CD8-positive, alpha-beta T cell (primary cell): ENCODE measurements at regions of chr18 and their contacts with region 1.

Region 1: DNA sequence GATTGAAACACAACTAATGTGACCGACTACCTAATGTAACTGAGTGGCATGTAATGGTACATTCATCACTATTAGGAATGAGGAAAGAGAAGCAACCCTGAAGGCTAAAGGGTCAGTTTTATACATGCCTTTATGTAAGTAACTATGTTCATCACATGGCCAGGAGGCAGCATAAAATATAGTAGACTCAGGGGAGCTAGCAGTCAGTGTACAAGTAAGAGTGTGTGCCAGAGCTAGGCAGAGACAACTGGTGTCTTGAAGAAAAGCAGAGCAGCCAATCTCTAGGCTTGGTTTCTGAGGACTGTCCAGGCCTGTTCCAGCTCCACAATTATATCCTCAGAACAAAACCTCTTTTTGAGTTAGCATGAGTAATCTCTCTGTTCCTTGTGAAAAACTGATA is 18.1 kb downstream of the SMAD2 start:
- DNase-seq: peak in 1 of 9 experiments; percentile 13
- ATAC-seq: peak; percentile 47
- H3K4me3 ChIP-seq: no peak overlapping the region
- H3K4me3 Mint-ChIP-seq: peak overlapping the region; percentile 20
- H3K27ac ChIP-seq: peak overlapping the region in 1 of 2 experiments; percentile 57
- H3K27ac Mint-ChIP-seq: peak overlapping the region; percentile 79
- H3K4me1 ChIP-seq: peaks cover 37% of the 10 kb centered on the region
- H3K4me1 Mint-ChIP-seq: peaks cover 84% of the 10 kb centered on the region
- H3K27me3 ChIP-seq: no peaks in the 10 kb centered on the region
- H3K27me3 Mint-ChIP-seq: no peaks in the 10 kb centered on the region
- CTCF ChIP-seq: no peak

Region 2: GRCh38 chr18:47876813-47877212 is 35.5 kb before region 1 on chr18:
- CTCF ChIA-PET with region 1: no interaction called
- POLR2A ChIA-PET with region 1: no interaction called
- intact Hi-C with region 1: loop called in 1 of 2 experiments (anchors 5 kb)
- DNase-seq: peak in 1 of 9 experiments; percentile 12
- ATAC-seq: no peak
- H3K4me3 ChIP-seq: no peak overlapping the region
- H3K4me3 Mint-ChIP-seq: no peak overlapping the region
- H3K27ac ChIP-seq: no peak overlapping the region
- H3K27ac Mint-ChIP-seq: no peak overlapping the region
- H3K4me1 ChIP-seq: no peaks in the 10 kb centered on the region
- H3K4me1 Mint-ChIP-seq: peaks cover 55% of the 10 kb centered on the region
- H3K27me3 ChIP-seq: no peaks in the 10 kb centered on the region
- H3K27me3 Mint-ChIP-seq: no peaks in the 10 kb centered on the region
- CTCF ChIP-seq: peak; percentile 44

Region 3: DNA sequence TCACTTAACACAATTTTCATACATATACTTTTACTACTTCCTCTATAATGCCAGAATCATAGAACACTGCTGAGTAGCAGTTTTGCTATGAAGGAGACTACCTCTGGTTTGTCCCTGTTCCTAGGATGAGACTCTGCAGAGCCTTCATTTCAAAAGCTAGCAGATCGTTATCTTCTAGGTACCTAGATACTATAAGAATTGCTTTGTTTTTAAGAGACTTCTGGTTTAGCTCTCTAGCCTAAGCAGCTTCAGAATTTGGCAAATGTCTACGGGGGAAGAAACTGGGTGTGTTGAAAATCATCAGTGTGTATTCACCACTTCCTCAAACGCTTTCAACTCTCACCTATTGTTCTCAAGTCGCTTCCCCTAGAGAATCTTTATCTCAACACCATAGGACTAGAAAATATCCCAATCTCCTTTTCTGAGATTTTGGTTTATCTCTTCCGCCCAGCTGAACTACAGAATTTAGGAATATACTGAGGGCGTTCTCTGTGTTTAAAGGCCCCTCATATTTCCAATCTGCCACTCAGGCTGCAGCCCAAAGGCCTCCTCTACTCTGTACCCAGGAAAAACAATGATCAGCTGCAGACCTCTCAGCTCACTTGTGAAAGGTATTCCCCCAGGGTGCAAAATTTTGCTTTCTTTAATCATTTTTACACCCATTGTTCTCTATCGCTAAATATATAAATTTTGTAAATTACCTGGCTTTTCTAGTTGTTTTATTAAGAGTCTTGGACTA is 10.6 kb before region 1 on chr18:
- CTCF ChIA-PET with region 1: interaction called, 3 read pairs
- POLR2A ChIA-PET with region 1: interaction called, 6 read pairs
- intact Hi-C with region 1: loop called in 1 of 2 experiments (anchors 1 kb)
- DNase-seq: peak in 3 of 9 experiments; percentile 13 to 65 (median 43)
- ATAC-seq: peak; percentile 92
- H3K4me3 ChIP-seq: peak overlapping the region in 1 of 2 experiments; percentile 6
- H3K4me3 Mint-ChIP-seq: peak overlapping the region; percentile 62
- H3K27ac ChIP-seq: peak overlapping the region; percentile 6 to 65
- H3K27ac Mint-ChIP-seq: peak overlapping the region; percentile 91
- H3K4me1 ChIP-seq: peaks cover 33% of the 10 kb centered on the region
- H3K4me1 Mint-ChIP-seq: peaks cover 82% of the 10 kb centered on the region
- H3K27me3 ChIP-seq: no peaks in the 10 kb centered on the region
- H3K27me3 Mint-ChIP-seq: no peaks in the 10 kb centered on the region
- CTCF ChIP-seq: no peak